IMR-90 (cell line): ENCODE measurements at regions of chr10 and their contacts with region 1.

Region 1: DNA sequence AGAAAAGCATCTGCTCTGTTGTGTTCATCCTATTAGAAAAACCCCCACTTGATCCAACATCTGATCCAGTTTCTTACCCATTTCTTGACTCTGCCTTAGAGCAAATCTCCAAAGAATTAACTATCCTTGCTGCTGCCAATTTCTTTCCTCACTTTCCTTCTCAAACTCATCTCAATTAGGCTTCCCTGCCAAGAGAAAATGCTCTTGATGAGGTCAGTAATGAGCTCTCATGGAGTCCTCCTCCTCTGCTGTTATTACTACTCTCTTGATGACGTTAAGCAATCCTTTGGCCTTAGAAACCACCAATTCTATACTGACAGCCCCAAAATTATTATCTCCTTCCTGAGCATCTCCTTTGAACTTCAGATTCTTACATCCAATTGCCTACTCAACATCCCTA is 162.0 kb upstream of the FAM13C start:
- DNase-seq: no peak
- ATAC-seq: no peak
- H3K4me3 ChIP-seq: no peak overlapping the region
- H3K27ac ChIP-seq: no peak overlapping the region
- H3K4me1 ChIP-seq: no peaks in the 10 kb centered on the region
- H3K27me3 ChIP-seq: no peaks in the 10 kb centered on the region
- CTCF ChIP-seq: no peak
- POLR2A ChIP-seq: no peak
- RAD21 ChIP-seq: no peak

Region 2: DNA sequence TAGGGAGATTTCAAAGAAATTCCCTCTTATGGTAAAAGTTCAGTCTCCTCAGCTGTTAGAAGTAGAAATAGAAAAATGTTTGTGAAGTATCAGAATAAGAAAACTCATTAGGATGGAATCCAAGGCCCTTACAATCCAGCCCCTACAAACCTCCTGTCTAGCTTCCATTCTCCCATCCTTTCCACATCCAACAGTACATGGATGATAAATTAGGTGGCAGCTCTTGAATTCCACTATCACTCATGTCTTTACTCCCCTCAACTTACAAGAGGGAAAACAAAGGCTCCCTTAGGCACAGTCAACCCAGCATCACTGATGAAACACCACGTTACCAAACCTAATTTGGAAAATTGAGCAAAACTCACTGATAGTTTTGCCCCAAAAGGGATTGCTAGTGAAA is 185.0 kb before region 1 on chr10:
- CTCF ChIA-PET with region 1: no interaction called
- POLR2A ChIA-PET with region 1: no interaction called
- dilution Hi-C with region 1: no loop called
- in situ Hi-C with region 1: no loop called
- intact Hi-C with region 1: loop called (anchors 2 kb)
- DNase-seq: no peak
- ATAC-seq: no peak
- H3K4me3 ChIP-seq: no peak overlapping the region
- H3K27ac ChIP-seq: no peak overlapping the region
- H3K4me1 ChIP-seq: peaks cover 13% of the 10 kb centered on the region
- H3K27me3 ChIP-seq: no peaks in the 10 kb centered on the region
- CTCF ChIP-seq: no peak
- POLR2A ChIP-seq: no peak
- RAD21 ChIP-seq: no peak

Region 3: GRCh38 chr10:59479426-59479825 is 44.9 kb before region 1 on chr10:
- CTCF ChIA-PET with region 1: no interaction called
- POLR2A ChIA-PET with region 1: interaction called, 11 read pairs
- dilution Hi-C with region 1: no loop called
- in situ Hi-C with region 1: no loop called
- intact Hi-C with region 1: no loop called
- DNase-seq: no peak
- ATAC-seq: no peak
- H3K4me3 ChIP-seq: no peak overlapping the region
- H3K27ac ChIP-seq: no peak overlapping the region
- H3K4me1 ChIP-seq: no peaks in the 10 kb centered on the region
- H3K27me3 ChIP-seq: peaks cover 8% of the 10 kb centered on the region
- CTCF ChIP-seq: no peak
- POLR2A ChIP-seq: no peak
- RAD21 ChIP-seq: no peak

Region 4: GRCh38 chr10:59865101-59865500 is 340.8 kb after region 1 on chr10:
- CTCF ChIA-PET with region 1: no interaction called
- POLR2A ChIA-PET with region 1: no interaction called
- dilution Hi-C with region 1: no loop called
- in situ Hi-C with region 1: no loop called
- intact Hi-C with region 1: no loop called
- DNase-seq: peak; percentile 18
- ATAC-seq: no peak
- H3K4me3 ChIP-seq: no peak overlapping the region
- H3K27ac ChIP-seq: no peak overlapping the region
- H3K4me1 ChIP-seq: no peaks in the 10 kb centered on the region
- H3K27me3 ChIP-seq: no peaks in the 10 kb centered on the region
- CTCF ChIP-seq: peak; percentile 23; the same call in 1 of the 2 replicates
- POLR2A ChIP-seq: no peak
- RAD21 ChIP-seq: peak; percentile 31; the same call in 1 of the 2 replicates